ENCODE measurements at regions of chr22 and their contacts with region 1.

Region 1: GRCh38 chr22:32265882-32266767 is 11.0 kb upstream of the SLC5A4 start:
- DNase-seq: peak; percentile 87
- ATAC-seq: peak; percentile 92
- H3K4me3 Mint-ChIP-seq: no peak overlapping the region
- H3K27ac Mint-ChIP-seq: no peak overlapping the region
- H3K4me1 Mint-ChIP-seq: peaks cover 8% of the 10 kb centered on the region
- H3K27me3 Mint-ChIP-seq: peaks cover 7% of the 10 kb centered on the region

Region 2: DNA sequence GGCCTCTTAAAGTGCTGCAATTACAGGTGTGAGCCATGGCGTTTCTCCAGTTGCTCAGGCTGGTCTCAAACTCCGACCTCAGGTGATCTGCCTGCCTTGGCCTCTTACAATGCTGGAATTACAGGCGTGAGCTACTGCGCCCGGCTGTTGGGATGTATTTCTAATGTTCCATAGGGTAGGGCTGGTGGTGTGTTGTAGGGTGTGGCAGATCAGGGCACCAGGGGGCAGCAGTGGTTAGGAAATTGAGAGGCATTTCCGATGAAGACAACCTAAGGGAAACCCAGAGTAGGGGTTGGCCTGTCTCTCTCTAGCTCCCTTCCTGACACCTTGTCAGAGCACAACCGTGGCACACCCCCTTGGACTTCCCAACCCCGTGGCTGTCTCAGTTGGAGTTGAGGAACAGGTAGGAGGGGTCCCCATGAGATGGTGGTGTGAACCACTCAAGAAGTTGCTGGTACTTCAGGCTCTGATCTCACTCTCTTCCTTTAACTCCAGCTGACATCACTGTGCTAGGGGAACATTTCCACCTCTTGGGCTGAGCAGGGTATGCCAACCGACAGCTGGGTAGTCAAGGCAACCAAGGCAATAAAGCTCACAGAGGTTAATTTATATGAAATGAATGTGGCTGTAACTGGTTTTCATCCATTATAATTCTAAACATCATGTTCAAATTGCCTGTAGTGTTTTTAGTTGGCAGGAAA is 288.8 kb before region 1 on chr22:
- CTCF ChIA-PET with region 1: interaction called, 19 read pairs
- POLR2A ChIA-PET with region 1: no interaction called
- intact Hi-C with region 1: loop called (anchors 1 kb)
- DNase-seq: peak; percentile 92
- ATAC-seq: peak; percentile 98
- H3K4me3 Mint-ChIP-seq: no peak overlapping the region
- H3K27ac Mint-ChIP-seq: no peak overlapping the region
- H3K4me1 Mint-ChIP-seq: peaks cover 5% of the 10 kb centered on the region
- H3K27me3 Mint-ChIP-seq: peaks cover 2% of the 10 kb centered on the region

Region 3: DNA sequence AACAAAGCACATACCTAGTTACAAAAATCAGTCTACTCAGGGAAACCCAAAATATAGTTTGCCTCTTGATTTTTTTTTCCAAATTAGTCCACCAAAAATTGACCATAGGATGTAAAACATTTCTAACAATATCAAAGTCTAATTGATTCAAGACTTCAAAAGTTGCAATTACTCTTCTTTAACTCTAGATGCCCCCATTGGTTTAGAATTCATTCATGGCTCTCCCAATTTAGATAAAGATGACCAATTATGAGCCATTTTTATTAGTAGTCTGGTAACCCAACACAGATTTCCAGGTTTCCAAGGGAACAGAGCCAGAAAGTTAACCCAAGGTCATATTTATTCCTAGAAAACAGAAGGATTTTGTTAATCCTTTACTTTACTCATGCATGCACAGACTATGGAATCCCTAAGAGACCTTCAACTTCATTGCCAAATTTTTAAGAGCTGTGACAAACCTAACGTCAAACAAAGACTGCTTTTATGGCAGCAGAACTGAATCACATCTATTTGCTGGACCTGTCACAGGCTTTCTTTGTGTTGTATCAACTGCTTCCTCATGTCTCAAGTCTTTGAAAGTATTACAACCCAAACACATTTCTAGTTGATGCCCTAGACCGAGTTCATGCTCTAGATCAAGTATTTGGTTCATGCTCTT is 162.3 kb before region 1 on chr22:
- CTCF ChIA-PET with region 1: interaction called, 8 read pairs
- POLR2A ChIA-PET with region 1: no interaction called
- intact Hi-C with region 1: loop called (anchors 1 to 10 kb)
- DNase-seq: no peak
- ATAC-seq: no peak
- H3K4me3 Mint-ChIP-seq: no peak overlapping the region
- H3K27ac Mint-ChIP-seq: no peak overlapping the region
- H3K4me1 Mint-ChIP-seq: no peaks in the 10 kb centered on the region
- H3K27me3 Mint-ChIP-seq: peaks cover 16% of the 10 kb centered on the region

Region 4: GRCh38 chr22:32144496-32145274 is 121.4 kb before region 1 on chr22:
- CTCF ChIA-PET with region 1: interaction called, 6 read pairs
- POLR2A ChIA-PET with region 1: no interaction called
- intact Hi-C with region 1: loop called in 1 of 2 experiments (anchors 2 kb)
- DNase-seq: no peak
- ATAC-seq: peak; percentile 7
- H3K4me3 Mint-ChIP-seq: no peak overlapping the region
- H3K27ac Mint-ChIP-seq: no peak overlapping the region
- H3K4me1 Mint-ChIP-seq: peaks cover 38% of the 10 kb centered on the region
- H3K27me3 Mint-ChIP-seq: no peaks in the 10 kb centered on the region

Region 5: GRCh38 chr22:32202539-32203180 is 63.5 kb before region 1 on chr22:
- CTCF ChIA-PET with region 1: interaction called, 6 read pairs
- POLR2A ChIA-PET with region 1: no interaction called
- intact Hi-C with region 1: loop called in 1 of 2 experiments (anchors 2 kb)
- DNase-seq: peak; percentile 59
- ATAC-seq: peak; percentile 55
- H3K4me3 Mint-ChIP-seq: peak overlapping the region; percentile 63
- H3K27ac Mint-ChIP-seq: no peak overlapping the region
- H3K4me1 Mint-ChIP-seq: peaks cover 21% of the 10 kb centered on the region
- H3K27me3 Mint-ChIP-seq: peaks cover 18% of the 10 kb centered on the region

Region 6: GRCh38 chr22:32281072-32281471 is 14.9 kb after region 1 on chr22:
- CTCF ChIA-PET with region 1: interaction called, 15 read pairs
- POLR2A ChIA-PET with region 1: no interaction called
- intact Hi-C with region 1: no loop called
- DNase-seq: no peak
- ATAC-seq: no peak
- H3K4me3 Mint-ChIP-seq: no peak overlapping the region
- H3K27ac Mint-ChIP-seq: no peak overlapping the region
- H3K4me1 Mint-ChIP-seq: no peaks in the 10 kb centered on the region
- H3K27me3 Mint-ChIP-seq: peaks cover 11% of the 10 kb centered on the region

Region 7: DNA sequence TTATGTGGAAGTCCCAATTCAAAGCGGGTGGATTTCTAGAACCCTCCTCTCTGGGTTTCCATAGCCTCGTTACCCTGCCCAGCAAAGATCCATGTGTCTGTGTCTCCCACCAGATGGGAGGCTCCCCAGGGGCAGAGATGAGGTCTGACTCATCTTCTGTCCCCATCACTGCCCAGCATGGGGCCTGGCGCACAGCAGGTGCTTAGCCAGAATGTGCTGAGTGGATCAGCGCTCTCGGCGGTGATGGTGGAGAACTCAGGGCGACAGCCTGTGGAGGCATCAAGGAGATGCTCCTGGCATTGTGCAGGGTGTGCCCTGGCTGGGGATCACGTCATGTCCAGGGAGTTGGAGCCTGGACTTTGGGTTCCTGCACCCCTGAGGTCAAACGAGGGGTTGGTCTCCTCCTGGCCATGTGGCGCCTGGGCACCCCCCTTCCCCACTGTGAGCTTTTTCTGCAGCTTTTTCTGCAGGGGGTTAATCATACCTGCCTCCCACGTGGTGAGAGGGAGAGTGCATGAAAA is 45.5 kb after region 1 on chr22:
- CTCF ChIA-PET with region 1: interaction called, 3 read pairs
- POLR2A ChIA-PET with region 1: no interaction called
- intact Hi-C with region 1: loop called in 1 of 2 experiments (anchors 2 kb)
- DNase-seq: no peak
- ATAC-seq: no peak
- H3K4me3 Mint-ChIP-seq: no peak overlapping the region
- H3K27ac Mint-ChIP-seq: no peak overlapping the region
- H3K4me1 Mint-ChIP-seq: no peaks in the 10 kb centered on the region
- H3K27me3 Mint-ChIP-seq: peaks cover 17% of the 10 kb centered on the region

Region 8: GRCh38 chr22:32341122-32341740 is 75.1 kb after region 1 on chr22:
- CTCF ChIA-PET with region 1: no interaction called
- POLR2A ChIA-PET with region 1: no interaction called
- intact Hi-C with region 1: no loop called
- DNase-seq: no peak
- ATAC-seq: no peak
- H3K4me3 Mint-ChIP-seq: no peak overlapping the region
- H3K27ac Mint-ChIP-seq: no peak overlapping the region
- H3K4me1 Mint-ChIP-seq: peaks cover 6% of the 10 kb centered on the region
- H3K27me3 Mint-ChIP-seq: peaks cover 32% of the 10 kb centered on the region

Measured in activated CD4-positive, alpha-beta T cell treated with anti-CD3 and anti-CD28 coated beads for 36 hours (primary cell).